Heart left ventricle (tissue), 16 donors: ENCODE measurements at regions of chr11 and their contacts with region 1.

Region 1: GRCh38 chr11:65662799-65663638 is at the start of gene RELA:
- DNase-seq: peak; percentile 94 to 97 (median 96)
- ATAC-seq: peak; percentile 87 to 93 (median 90)
- H3K4me3 ChIP-seq: peak within 1 kb of the TSS; percentile 46 to 100 (median 94)
- H3K27ac ChIP-seq: peak within 1 kb of the TSS; percentile 91 to 100 (median 99)
- H3K4me1 ChIP-seq: peaks cover 5 to 35% (median 25%) of the 10 kb centered on the region in 12 donors
- H3K27me3 ChIP-seq: no peaks in the 10 kb centered on the region
- CTCF ChIP-seq: peak in 1 of 12 donors; percentile 11
- POLR2A ChIP-seq: peak in 1 of 2 donors; percentile 84
- total RNA-seq, gene RELA: 31.2 to 86.4 (median 42.3) TPM

Region 2: GRCh38 chr11:65013692-65014145 is 649.3 kb before region 1 on chr11:
- intact Hi-C with region 1: loop called in 1 of 10 experiments (anchors 5 kb)
- DNase-seq: peak; percentile 95 to 96 (median 95)
- ATAC-seq: peak; percentile 85 to 95 (median 94)
- H3K4me3 ChIP-seq: peak overlapping the region; percentile 61 to 89 (median 80)
- H3K27ac ChIP-seq: peak overlapping the region; percentile 92 to 100 (median 99)
- H3K4me1 ChIP-seq: peaks cover 0 to 30% (median 14%) of the 10 kb centered on the region in 12 donors
- H3K27me3 ChIP-seq: no peaks in the 10 kb centered on the region
- CTCF ChIP-seq: peak in 7 of 12 donors; percentile 8 to 72 (median 50)
- POLR2A ChIP-seq: no peak

Region 3: GRCh38 chr11:65615229-65615941 is 47.6 kb before region 1 on chr11 and contains the start of gene PCNX3:
- intact Hi-C with region 1: loop called in 1 of 10 experiments (anchors 2 kb)
- DNase-seq: peak; percentile 100
- ATAC-seq: peak; percentile 86 to 90 (median 88)
- H3K4me3 ChIP-seq: peak within 1 kb of the TSS; percentile 89 to 100 (median 96)
- H3K27ac ChIP-seq: peak within 1 kb of the TSS; percentile 95 to 99 (median 97)
- H3K4me1 ChIP-seq: peaks cover 5 to 57% (median 34%) of the 10 kb centered on the region in 12 donors
- H3K27me3 ChIP-seq: no peaks in the 10 kb centered on the region
- CTCF ChIP-seq: no peak
- POLR2A ChIP-seq: peak in 1 of 2 donors; percentile 68
- total RNA-seq, gene PCNX3: 9.5 to 23.4 (median 15.4) TPM

Region 4: GRCh38 chr11:65652511-65653231 is 10.3 kb before region 1 on chr11:
- intact Hi-C with region 1: loop called in 1 of 10 experiments (anchors 1 kb)
- DNase-seq: peak; percentile 96 to 98 (median 97)
- ATAC-seq: peak; percentile 82 to 93 (median 90)
- H3K4me3 ChIP-seq: peak overlapping the region; percentile 1 to 66 (median 60)
- H3K27ac ChIP-seq: peak overlapping the region; percentile 89 to 99 (median 96)
- H3K4me1 ChIP-seq: peaks cover 8 to 65% (median 40%) of the 10 kb centered on the region in 12 donors
- H3K27me3 ChIP-seq: no peaks in the 10 kb centered on the region
- CTCF ChIP-seq: peak in 2 of 12 donors; percentile 17 to 22
- POLR2A ChIP-seq: peak in 1 of 2 donors; percentile 72

Region 5: DNA sequence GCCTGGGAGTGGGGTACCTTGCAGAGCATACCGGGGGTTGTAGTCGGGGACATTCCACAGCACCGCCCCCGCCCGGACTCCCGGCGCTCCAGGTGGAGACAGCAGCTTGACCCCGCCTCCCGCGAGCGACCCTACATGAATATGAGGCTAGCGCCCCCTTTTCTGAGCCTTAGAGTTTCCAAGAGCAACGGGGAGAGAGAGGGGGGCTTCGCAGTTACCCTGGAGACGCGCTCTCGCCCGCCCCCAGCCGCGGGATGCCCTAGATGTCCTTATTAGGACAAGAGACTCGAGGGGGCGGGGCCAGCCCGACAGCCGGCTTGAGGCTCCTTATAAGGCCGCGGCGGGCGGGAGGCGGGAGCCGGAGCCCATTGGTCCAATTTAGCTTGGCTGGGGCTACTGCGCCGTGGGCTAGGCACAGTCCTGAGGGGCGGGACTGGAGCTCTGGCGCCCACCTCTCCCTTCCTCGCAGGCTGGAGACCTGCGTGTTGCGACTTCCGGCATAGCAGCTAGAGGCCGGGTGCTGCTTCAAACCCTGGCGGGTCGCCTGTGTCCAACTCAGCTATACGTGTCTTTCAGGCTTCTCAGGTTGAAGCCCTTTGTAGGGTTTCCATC is 196.3 kb after region 1 on chr11:
- intact Hi-C with region 1: loop called in 1 of 10 experiments (anchors 5 kb)
- DNase-seq: peak; percentile 99 to 100 (median 99)
- ATAC-seq: peak; percentile 77 to 87 (median 83)
- H3K4me3 ChIP-seq: peak overlapping the region; percentile 74 to 100 (median 92)
- H3K27ac ChIP-seq: peak overlapping the region; percentile 94 to 99 (median 98)
- H3K4me1 ChIP-seq: peaks cover 0 to 57% (median 32%) of the 10 kb centered on the region in 12 donors
- H3K27me3 ChIP-seq: no peaks in the 10 kb centered on the region
- CTCF ChIP-seq: peak in 4 of 12 donors; percentile 7 to 42 (median 25)
- POLR2A ChIP-seq: peak; percentile 82 to 98

Region 6: DNA sequence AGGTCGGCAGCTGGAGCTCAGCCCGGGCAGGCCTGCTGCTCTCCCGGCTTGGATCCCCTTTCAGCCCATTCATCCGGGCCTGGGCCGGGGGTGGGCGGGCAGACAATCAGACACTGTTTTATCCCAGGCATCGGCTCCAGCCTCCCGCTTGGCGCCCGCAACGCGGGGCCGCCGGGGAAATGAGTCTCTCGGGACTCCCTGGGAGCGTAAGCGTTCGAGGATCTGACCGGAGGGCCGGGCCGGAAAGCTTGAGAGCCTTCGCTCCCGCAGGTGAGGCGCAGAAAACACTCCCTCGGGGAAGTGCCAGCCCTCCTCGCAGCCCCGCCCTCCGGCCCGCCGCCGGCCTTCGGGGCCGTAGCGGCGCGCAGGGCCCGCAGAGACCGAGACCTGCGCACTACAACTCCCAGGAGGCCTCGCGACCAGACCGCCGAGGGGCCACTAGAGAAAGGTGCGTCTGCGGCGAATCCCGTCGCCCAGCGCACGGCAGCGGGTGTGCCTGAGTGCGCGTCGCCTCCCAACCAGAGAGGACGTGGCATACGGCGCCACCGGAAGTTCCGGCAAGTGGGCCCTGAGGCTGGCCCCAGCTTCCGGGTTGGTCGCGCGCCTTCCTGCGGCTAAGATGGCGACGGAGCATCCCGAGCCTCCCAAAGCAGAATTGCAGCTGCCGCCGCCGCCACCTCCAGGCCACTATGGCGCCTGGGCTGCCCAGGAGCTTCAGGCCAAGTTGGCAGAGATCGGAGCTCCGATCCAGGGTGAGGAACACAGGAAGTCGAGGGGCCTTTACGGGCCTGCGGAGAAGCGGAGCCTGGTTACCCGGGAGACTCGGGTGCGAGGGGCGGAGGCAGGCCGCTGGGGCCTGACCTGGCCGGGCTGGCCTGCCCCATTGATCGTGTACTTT is 389.0 kb after region 1 on chr11 and contains the start of gene SF3B2:
- intact Hi-C with region 1: loop called in 1 of 10 experiments (anchors 5 kb)
- DNase-seq: peak; percentile 97 to 99 (median 99)
- ATAC-seq: peak; percentile 96 to 99 (median 98)
- H3K4me3 ChIP-seq: peak within 1 kb of the TSS; percentile 51 to 100 (median 87)
- H3K27ac ChIP-seq: peak within 1 kb of the TSS; percentile 80 to 96 (median 92)
- H3K4me1 ChIP-seq: peaks cover 0 to 41% (median 24%) of the 10 kb centered on the region in 12 donors
- H3K27me3 ChIP-seq: peaks cover 0 to 20% (median 5%) of the 10 kb centered on the region in 9 donors
- CTCF ChIP-seq: peak in 3 of 12 donors; percentile 17 to 26 (median 20)
- POLR2A ChIP-seq: peak in 1 of 2 donors; percentile 62
- total RNA-seq, gene SF3B2: 69.8 to 92.9 (median 79.6) TPM